Motor neuron (in vitro differentiated cells): ENCODE measurements at regions of chr3 and their contacts with region 1.

Region 1: DNA sequence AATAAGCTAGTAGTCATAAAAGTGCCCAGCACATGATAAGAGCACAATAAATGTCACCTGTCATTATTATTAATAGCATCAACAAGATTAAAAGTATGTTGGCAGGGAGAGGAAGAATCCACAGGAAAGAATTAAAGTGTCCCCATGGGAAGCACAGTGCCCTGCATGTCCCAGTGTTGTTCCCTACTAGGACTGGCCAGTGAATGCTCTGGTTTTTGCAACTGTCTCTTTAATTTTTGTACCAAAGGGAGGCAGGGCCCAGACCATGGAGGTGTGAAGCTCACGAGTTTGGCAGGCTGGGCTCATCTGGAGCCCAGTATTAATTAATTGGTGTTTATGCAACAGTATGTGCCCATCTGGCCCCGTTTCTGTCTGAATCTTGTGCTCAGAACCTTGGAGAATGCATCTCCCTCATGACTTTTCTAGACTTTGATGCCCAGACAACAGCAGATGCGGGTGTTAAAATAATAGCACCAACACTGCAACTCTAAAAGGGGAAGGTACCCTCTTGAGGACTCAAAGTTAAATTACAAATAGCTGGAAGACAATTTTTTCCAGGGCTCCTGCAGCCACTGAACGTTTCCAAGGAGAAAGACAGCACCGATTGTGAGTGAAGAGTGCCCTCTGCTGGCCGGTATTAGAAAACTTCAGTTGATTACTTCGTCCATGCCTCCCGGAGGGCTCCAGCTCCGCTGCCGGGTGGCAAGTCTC is 71.9 kb upstream of the SPATA12 start:
- ATAC-seq: peak; percentile 71 to 94 (median 88)
- H3K4me3 ChIP-seq: no peak overlapping the region
- H3K27ac ChIP-seq: no peak overlapping the region
- H3K4me1 ChIP-seq: no peaks in the 10 kb centered on the region

Region 2: DNA sequence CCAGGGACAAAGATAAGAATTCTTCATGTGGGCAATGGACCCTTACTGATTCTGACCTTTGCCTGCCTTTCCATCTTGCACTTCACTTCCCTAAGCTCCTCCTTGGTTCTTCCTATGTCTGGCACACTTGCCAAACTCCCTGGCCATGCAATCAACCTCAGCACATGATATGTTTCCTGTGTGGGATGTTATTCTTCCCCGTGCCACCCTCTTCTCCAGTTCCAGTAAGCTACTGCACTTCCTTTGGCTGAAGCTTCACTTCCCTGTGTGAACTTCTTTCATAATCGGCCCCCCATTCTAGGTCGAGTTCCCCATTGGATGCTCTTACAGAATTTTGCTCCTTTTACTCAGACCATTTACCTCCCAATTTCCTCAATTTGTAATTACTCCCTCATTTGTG is 294.9 kb before region 1 on chr3:
- in situ Hi-C with region 1: loop called in 1 of 9 experiments (anchors 10 kb)
- ATAC-seq: no peak
- H3K4me3 ChIP-seq: no peak overlapping the region
- H3K27ac ChIP-seq: no peak overlapping the region
- H3K4me1 ChIP-seq: no peaks in the 10 kb centered on the region

Region 3: GRCh38 chr3:56702490-56703315 is 285.9 kb before region 1 on chr3:
- in situ Hi-C with region 1: loop called (anchors 10 to 25 kb)
- ATAC-seq: peak in 7 of 8 experiments; percentile 40 to 86 (median 71)
- H3K4me3 ChIP-seq: no peak overlapping the region
- H3K27ac ChIP-seq: no peak overlapping the region
- H3K4me1 ChIP-seq: no peaks in the 10 kb centered on the region

Region 4: GRCh38 chr3:56801662-56802377 is 186.8 kb before region 1 on chr3 and contains the start of gene ARHGEF3:
- in situ Hi-C with region 1: loop called in 1 of 9 experiments (anchors 25 kb)
- ATAC-seq: peak; percentile 90 to 96 (median 94)
- H3K4me3 ChIP-seq: peak within 1 kb of the TSS; percentile 64 to 73 (median 70)
- H3K27ac ChIP-seq: no peak within 1 kb of the TSS
- H3K4me1 ChIP-seq: peaks cover 0 to 30% of the 10 kb centered on the region in 2 donors
- total RNA-seq, gene ARHGEF3: 4.5 to 137 (median 14.3) TPM

Region 5: DNA sequence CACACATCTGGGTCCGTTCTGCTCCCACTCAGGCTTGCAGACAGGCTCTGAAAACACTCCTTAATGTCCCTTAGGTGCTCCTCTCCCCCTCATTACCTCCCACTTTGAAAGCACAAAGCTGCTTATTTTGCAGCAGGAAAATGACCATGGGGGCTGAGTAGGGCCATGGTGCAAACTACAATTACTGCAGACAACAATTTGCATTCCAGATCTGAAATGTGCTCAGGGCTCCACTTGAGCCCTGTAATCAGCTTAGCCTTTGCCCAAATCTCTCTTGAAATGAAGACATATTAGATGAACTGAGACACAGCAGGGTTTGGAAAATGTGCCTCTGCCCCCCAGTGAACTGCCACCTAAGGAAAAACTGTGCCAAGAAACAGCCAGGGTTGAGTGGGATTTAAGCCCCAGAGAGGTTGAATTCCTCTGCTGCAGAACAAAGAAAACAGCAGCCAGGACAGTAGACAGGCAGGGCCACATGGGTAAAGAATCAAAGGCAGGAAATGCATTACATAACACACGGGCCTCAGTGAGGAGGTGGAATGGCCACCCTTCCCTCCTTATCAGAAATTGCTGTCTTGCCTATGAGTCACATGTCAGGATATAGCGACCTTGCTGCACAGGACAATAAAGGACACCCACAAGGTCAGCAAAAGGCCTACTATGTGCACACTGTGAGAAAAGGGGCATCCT is 60.1 kb before region 1 on chr3:
- in situ Hi-C with region 1: no loop called
- ATAC-seq: peak in 2 of 8 experiments; percentile 20 to 25
- H3K4me3 ChIP-seq: no peak overlapping the region
- H3K27ac ChIP-seq: no peak overlapping the region
- H3K4me1 ChIP-seq: peaks cover 4 to 6% of the 10 kb centered on the region in 2 donors

Region 6: GRCh38 chr3:58683466-58683865 is 1694.9 kb after region 1 on chr3:
- in situ Hi-C with region 1: no loop called
- ATAC-seq: peak in 2 of 8 experiments; percentile 12 to 27
- H3K4me3 ChIP-seq: no peak overlapping the region
- H3K27ac ChIP-seq: no peak overlapping the region
- H3K4me1 ChIP-seq: peaks cover 0 to 2% of the 10 kb centered on the region in 2 donors